ENCODE measurements at regions of chr7 and their contacts with region 1.

Region 1: DNA sequence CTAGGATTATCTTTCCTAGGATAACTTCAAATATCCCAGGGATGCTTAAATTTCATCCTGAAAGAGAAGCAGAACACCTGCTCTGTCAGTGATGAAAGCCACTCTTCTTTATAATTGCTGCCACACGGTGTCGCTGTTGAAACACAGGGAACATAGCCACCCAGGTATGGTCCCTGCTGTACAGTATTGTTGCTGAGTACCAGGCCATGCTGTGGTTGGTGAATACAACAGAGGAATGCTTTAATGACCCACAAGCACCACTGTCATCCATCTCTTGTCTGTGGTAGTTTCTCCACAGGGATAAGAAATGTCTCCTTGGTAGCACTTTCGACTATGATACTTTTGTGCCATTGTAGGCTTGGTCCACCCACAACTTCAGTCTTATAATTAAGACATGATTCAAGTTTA is 70.6 kb upstream of the STARD3NL start:
- DNase-seq: peak; percentile 74
- H3K4me3 ChIP-seq: no peak overlapping the region
- H3K27ac ChIP-seq: no peak overlapping the region
- H3K4me1 ChIP-seq: no peaks in the 10 kb centered on the region
- H3K27me3 ChIP-seq: no peaks in the 10 kb centered on the region
- CTCF ChIP-seq: peak; percentile 63

Region 2: GRCh38 chr7:37901236-37901827 is 206.2 kb before region 1 on chr7:
- intact Hi-C with region 1: loop called (anchors 5 kb)
- DNase-seq: no peak
- H3K4me3 ChIP-seq: no peak overlapping the region
- H3K27ac ChIP-seq: no peak overlapping the region
- H3K4me1 ChIP-seq: no peaks in the 10 kb centered on the region
- H3K27me3 ChIP-seq: no peaks in the 10 kb centered on the region
- CTCF ChIP-seq: peak; percentile 38

Region 3: GRCh38 chr7:37916673-37917660 is 190.5 kb before region 1 on chr7 and contains the start of gene SFRP4:
- intact Hi-C with region 1: loop called (anchors 5 kb)
- DNase-seq: peak; percentile 50
- H3K4me3 ChIP-seq: peak within 1 kb of the TSS; percentile 37
- H3K27ac ChIP-seq: no peak within 1 kb of the TSS
- H3K4me1 ChIP-seq: peaks cover 6% of the 10 kb centered on the region
- H3K27me3 ChIP-seq: peaks cover 17% of the 10 kb centered on the region
- CTCF ChIP-seq: peak; percentile 47
- total RNA-seq, gene SFRP4: 0.42 TPM in 1 of 2 donors, not detected in the other

Region 4: DNA sequence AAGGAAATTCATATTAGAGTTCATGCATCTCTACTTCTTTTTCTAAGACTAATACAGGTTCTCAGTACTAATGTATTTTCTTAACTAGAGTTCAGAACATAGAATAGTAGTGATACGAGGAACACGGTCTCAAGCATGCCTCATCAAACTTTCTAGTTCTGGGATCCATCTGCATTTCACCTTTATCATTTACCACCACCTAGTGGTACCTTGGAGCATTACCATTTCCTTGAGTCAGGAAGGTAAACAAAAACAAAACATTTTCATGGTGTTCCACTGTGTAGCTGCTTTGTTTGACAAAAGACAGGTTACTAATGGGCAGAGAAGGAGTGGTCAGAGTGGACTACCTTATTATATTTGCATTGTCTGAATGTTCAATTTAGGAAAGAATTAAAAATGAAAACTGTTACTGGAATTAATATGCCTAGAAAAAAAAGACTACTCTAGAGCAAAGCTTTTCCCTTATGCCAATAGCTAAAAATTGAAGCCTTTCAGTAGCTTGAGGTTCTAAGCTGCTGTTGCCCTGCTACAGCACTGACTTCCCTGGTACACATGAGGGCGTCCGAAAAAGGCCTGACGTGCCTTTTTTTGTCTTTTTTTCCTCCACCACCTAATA is 115.1 kb after region 1 on chr7:
- intact Hi-C with region 1: loop called (anchors 2 kb)
- DNase-seq: peak; percentile 54
- H3K4me3 ChIP-seq: no peak overlapping the region
- H3K27ac ChIP-seq: no peak overlapping the region
- H3K4me1 ChIP-seq: no peaks in the 10 kb centered on the region
- H3K27me3 ChIP-seq: no peaks in the 10 kb centered on the region
- CTCF ChIP-seq: peak; percentile 89

Region 5: GRCh38 chr7:38318803-38319416 is 211.4 kb after region 1 on chr7:
- intact Hi-C with region 1: loop called (anchors 10 kb)
- DNase-seq: no peak
- H3K4me3 ChIP-seq: no peak overlapping the region
- H3K27ac ChIP-seq: no peak overlapping the region
- H3K4me1 ChIP-seq: no peaks in the 10 kb centered on the region
- H3K27me3 ChIP-seq: no peaks in the 10 kb centered on the region
- CTCF ChIP-seq: peak; percentile 35

Region 6: GRCh38 chr7:38335492-38336147 is 228.1 kb after region 1 on chr7:
- intact Hi-C with region 1: no loop called
- DNase-seq: peak; percentile 87
- H3K4me3 ChIP-seq: no peak overlapping the region
- H3K27ac ChIP-seq: peak overlapping the region; percentile 21
- H3K4me1 ChIP-seq: no peaks in the 10 kb centered on the region
- H3K27me3 ChIP-seq: no peaks in the 10 kb centered on the region
- CTCF ChIP-seq: peak; percentile 86

Measured in colonic mucosa (tissue), 4 donors.